ENCODE measurements at regions of chr11 and their contacts with region 1.

Region 1: GRCh38 chr11:47186076-47186936 is at the start of gene PACSIN3:
- DNase-seq: peak; percentile 78
- CTCF ChIP-seq: no peak

Region 2: DNA sequence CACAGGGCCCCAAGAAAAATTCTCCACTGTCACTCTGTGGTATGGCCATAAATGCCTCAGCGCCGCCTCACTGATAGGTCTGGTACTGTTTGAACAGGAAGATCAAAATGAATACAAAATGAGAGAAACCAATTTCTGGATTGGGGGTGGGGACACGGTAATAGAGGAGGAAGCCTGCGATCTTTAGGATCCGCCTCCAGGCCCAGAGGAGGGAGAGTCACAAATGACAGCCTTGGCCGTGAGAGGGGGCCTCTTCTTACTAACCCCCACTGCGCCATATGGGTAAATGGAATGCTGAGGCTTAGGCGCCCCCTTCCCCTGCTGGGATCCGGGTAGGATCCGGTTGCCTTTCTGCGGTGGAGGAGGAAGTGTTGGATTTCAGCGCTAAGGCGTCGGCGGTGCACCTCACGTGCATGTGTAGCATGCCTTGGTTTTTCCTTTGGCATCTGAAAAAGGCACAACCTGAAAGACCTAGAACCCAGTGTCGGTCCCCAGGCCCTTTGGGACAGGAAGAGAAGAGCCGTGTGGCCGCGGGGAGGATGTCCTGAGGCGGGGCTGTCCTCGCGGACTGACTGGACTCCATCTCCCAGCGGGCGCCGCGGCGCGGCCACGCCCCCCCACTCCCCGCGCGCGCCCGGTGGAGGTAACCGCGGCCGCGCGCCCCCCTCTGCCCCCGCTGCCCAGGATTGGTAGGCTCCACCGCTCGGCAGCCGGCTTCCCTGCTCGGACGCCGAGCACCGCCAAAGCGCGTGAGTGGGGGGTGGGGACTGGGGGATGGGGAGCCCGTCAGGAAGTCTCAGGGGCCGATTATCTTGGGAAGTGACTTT is 82.9 kb after region 1 on chr11:
- in situ Hi-C with region 1: loop called (anchors 10 kb)
- DNase-seq: peak; percentile 93
- CTCF ChIP-seq: no peak

Region 3: GRCh38 chr11:47355283-47356128 is 169.2 kb after region 1 on chr11:
- in situ Hi-C with region 1: no loop called
- DNase-seq: no peak
- CTCF ChIP-seq: no peak

Measured in GM13976 (cell line).